Motor neuron (in vitro differentiated cells): ENCODE measurements at regions of chr19 and their contacts with region 1.

Region 1: GRCh38 chr19:46661020-46661731 is at the start of gene DACT3:
- ATAC-seq: peak; percentile 86 to 93 (median 89)
- H3K4me3 ChIP-seq: peak within 1 kb of the TSS; percentile 48 to 80 (median 60)
- H3K27ac ChIP-seq: peak within 1 kb of the TSS; percentile 75 to 84
- H3K4me1 ChIP-seq: peaks cover 2 to 11% of the 10 kb centered on the region in 2 donors
- total RNA-seq, gene DACT3: 1.9 to 16.3 (median 10.4) TPM

Region 2: GRCh38 chr19:45001087-45001739 is 1660.0 kb before region 1 on chr19 and contains the start of gene RELB:
- in situ Hi-C with region 1: no loop called
- ATAC-seq: peak; percentile 75 to 83 (median 79)
- H3K4me3 ChIP-seq: peak within 1 kb of the TSS; percentile 54 to 70 (median 58)
- H3K27ac ChIP-seq: peak within 1 kb of the TSS; percentile 29 to 72
- H3K4me1 ChIP-seq: peaks cover 0 to 3% of the 10 kb centered on the region in 2 donors
- total RNA-seq, gene RELB: 1.7 to 15.4 (median 5.4) TPM

Region 3: GRCh38 chr19:46542428-46543230 is 118.5 kb before region 1 on chr19:
- in situ Hi-C with region 1: loop called in 1 of 9 experiments (anchors 25 kb)
- ATAC-seq: peak; percentile 86 to 92 (median 89)
- H3K4me3 ChIP-seq: no peak overlapping the region
- H3K27ac ChIP-seq: no peak overlapping the region
- H3K4me1 ChIP-seq: peaks cover 0 to 2% of the 10 kb centered on the region in 2 donors

Region 4: GRCh38 chr19:46614114-46614722 is 47.0 kb before region 1 on chr19:
- in situ Hi-C with region 1: loop called in 1 of 9 experiments (anchors 10 kb)
- ATAC-seq: peak; percentile 81 to 92 (median 86)
- H3K4me3 ChIP-seq: no peak overlapping the region
- H3K27ac ChIP-seq: no peak overlapping the region
- H3K4me1 ChIP-seq: peaks cover 3 to 7% of the 10 kb centered on the region in 2 donors